ENCODE measurements at regions of chr12 and their contacts with region 1.

Region 1: DNA sequence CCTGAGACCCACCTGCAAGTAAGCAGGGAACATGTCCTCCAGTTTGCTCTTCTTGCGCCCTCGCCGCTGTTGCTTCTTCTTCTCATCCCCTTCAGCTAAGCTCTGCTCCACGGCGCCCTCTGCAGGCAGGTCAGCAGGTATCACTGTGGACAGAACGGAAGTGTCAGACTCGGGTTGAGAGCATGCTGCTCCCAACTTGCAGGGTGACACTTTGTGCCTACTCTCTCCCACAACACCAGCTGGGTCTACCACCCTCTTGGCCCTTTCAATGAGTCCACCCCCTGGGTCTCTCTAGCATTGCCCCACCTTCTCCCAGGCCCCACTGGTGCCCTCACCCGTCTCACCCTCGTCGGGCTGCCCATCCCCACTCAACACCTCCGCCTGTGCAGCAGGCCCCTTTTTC is 16.7 kb downstream of the KMT2D start:
- H3K4me3 ChIP-seq: no peak overlapping the region
- H3K27ac ChIP-seq: no peak overlapping the region
- H3K4me1 ChIP-seq: no peaks in the 10 kb centered on the region
- CTCF ChIP-seq: peak; percentile 95

Region 2: DNA sequence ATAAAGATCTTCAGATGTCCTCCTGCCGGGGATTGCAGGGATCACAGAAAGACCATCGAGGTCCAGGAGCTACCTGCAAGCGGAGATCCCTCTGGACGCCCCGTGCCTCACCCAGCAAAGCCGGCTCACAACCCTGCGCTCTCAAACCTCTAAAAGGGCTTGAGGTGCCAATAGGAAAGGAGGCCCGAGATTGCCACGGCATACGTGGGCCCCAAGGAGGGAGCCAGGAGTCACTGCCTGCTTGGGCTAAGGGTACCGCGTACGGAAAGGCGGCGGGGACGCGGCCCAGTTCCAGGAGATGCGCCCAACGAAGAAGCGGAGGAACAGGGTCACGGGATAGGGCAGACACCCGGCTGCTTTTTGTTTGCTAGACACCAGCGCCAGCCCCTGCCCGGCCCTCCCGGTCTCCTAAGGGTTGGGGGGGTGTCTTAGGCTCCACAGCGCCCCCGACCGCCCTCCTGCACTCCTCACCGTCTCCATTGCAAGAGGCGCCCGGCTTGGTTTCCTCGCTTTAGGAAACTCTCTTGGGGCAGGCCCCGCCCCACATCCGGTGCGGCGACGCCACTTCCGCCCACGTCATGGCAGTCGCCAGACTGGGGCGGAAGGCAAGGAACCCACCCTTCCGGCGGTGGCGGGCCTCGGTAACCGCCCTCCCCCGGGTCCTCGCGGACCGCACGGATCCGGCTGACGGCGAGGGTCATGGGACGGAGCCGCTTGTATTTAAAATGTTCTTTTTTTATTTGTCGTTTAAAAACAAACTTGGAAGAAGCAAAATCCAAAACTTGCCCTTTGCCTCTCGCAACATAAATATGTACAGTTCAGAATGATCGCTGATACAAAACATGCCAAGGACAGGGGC is 25.4 kb before region 1 on chr12 and contains the start of gene PRKAG1:
- CTCF ChIA-PET with region 1: interaction called, 11 read pairs
- POLR2A ChIA-PET with region 1: interaction called, 3 read pairs
- H3K4me3 ChIP-seq: peak within 1 kb of the TSS; percentile 95
- H3K27ac ChIP-seq: peak within 1 kb of the TSS; percentile 84
- H3K4me1 ChIP-seq: no peaks in the 10 kb centered on the region; the same call in 1 of the 2 replicates
- CTCF ChIP-seq: peak; percentile 91

Region 3: DNA sequence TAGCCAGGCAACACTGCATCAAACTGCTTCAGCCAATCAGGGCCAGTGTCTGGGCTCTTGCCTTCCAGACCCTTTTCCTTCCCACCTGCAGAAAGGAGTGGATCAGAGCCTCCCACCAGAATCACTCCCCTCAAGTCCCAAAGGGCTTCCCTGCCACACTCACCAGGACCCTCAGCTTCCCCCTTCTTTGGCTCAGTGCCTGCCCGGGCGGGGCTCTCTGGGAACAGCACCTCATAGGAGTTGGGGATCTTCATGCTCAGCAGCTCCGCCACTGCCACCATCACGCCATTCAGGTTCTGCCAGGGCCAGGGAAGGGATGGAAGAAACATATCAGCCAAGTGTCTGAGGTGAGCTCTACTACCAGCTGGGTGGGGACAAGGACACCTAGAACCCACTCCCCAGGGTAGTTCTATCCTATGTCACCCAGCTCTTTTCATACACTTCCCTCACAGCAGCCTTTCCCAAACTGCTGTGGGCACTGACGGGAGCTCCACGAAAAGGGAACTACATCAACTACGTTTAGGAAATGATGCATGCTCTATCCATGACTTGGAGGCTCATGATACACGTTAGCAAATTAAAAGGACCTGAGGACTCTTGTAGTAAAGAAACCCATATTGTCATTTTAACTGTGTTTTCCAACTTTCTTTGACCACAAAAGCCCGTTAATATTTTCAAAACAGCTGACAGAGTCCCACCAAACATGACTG is 15.9 kb before region 1 on chr12:
- CTCF ChIA-PET with region 1: interaction called, 17 read pairs
- POLR2A ChIA-PET with region 1: interaction called, 8 read pairs
- H3K4me3 ChIP-seq: no peak overlapping the region
- H3K27ac ChIP-seq: no peak overlapping the region
- H3K4me1 ChIP-seq: no peaks in the 10 kb centered on the region
- CTCF ChIP-seq: no peak

Region 4: GRCh38 chr12:49033611-49034316 is 10.1 kb before region 1 on chr12:
- CTCF ChIA-PET with region 1: interaction called, 18 read pairs
- POLR2A ChIA-PET with region 1: interaction called, 8 read pairs
- H3K4me3 ChIP-seq: no peak overlapping the region
- H3K27ac ChIP-seq: no peak overlapping the region
- H3K4me1 ChIP-seq: no peaks in the 10 kb centered on the region
- CTCF ChIP-seq: no peak

Region 5: DNA sequence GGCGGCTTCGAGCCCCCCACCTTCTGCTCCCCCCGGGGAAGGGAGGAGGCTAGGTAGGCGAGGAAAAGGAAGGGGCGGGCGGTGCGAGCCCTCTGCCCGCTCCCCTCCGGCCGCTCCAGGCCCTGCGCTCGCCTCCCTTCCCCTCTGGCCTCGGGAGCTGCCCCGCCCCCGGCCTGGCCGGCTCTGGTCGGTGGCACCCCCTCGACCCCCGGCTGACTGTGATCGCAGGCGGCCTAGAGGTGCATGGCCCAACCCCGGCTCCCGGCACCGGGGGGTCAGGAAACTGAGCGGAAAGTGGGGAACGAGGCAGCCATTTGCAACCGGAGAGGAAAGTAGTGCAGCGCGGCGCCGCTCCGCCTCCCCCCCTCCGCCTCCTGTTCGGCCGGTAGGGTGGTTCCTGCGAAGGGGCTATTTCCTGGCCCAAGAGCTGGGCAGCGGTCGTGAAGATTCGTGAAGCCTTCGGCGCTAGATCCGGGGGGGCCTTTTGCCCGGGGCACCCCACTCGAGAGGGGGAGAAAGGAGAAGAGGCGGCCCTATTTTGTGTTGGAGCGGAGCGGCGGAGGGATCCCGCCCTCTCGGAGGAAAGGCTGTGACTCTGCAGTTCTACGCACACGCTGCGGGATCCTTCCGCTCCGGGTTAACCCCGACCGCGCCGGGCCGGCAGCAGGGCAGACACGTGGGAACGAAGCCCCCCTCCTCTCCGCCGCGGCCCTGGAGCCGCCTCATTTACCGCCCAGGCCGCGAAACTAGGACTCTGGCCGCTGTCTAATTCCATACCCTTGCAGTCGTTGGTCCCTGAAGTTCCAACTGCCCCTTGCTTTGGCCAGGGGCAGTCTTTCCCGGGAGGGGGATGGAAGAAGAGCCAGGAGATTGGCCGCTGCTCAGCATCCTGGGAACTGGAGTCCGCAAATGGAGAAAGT is 16.6 kb after region 1 on chr12 and contains the start of gene KMT2D:
- CTCF ChIA-PET with region 1: interaction called, 18 read pairs
- POLR2A ChIA-PET with region 1: interaction called, 7 read pairs
- H3K4me3 ChIP-seq: peak within 1 kb of the TSS; percentile 95
- H3K27ac ChIP-seq: peak within 1 kb of the TSS; percentile 93
- H3K4me1 ChIP-seq: peaks cover 11% of the 10 kb centered on the region
- CTCF ChIP-seq: peak; percentile 94

Region 6: DNA sequence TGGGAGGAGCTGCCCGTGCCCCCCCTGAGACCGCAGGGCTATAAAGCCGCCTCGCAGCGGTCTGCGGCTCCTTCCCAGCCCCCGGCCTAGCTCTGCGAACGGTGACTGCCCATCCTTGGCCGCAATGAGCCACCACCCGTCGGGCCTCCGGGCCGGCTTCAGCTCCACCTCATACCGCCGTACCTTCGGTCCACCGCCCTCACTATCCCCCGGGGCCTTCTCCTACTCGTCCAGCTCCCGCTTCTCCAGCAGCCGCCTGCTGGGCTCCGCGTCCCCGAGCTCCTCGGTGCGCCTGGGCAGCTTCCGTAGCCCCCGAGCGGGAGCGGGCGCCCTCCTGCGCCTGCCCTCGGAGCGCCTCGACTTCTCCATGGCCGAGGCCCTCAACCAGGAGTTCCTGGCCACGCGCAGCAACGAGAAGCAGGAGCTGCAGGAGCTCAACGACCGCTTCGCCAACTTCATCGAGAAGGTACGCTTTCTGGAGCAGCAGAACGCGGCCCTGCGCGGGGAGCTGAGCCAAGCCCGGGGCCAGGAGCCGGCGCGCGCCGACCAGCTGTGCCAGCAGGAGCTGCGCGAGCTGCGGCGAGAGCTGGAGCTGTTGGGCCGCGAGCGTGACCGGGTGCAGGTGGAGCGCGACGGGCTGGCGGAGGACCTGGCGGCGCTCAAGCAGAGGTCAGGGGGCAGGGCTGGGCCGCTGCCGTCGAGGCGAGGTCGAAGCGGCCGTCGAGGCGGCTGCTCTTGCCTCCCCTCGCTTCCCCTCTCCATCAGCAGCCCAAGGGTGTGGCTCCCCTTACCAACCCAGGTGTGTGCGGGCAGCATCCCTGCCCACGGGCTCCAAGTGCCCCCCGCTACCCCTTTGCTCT is 251.4 kb after region 1 on chr12 and contains the start of gene PRPH:
- CTCF ChIA-PET with region 1: no interaction called
- POLR2A ChIA-PET with region 1: no interaction called
- H3K4me3 ChIP-seq: no peak within 1 kb of the TSS
- H3K27ac ChIP-seq: peak within 1 kb of the TSS; percentile 4; the same call in 1 of the 2 replicates
- H3K4me1 ChIP-seq: peaks cover 8% of the 10 kb centered on the region
- CTCF ChIP-seq: no peak